ENCODE measurements at regions of chr12 and their contacts with region 1.

Region 1: GRCh38 chr12:54279866-54280467 is at the start of gene CBX5:
- DNase-seq: peak; percentile 100
- H3K4me3 Mint-ChIP-seq: no peak within 1 kb of the TSS
- H3K27ac Mint-ChIP-seq: no peak within 1 kb of the TSS
- H3K4me1 Mint-ChIP-seq: peaks cover 61% of the 10 kb centered on the region
- H3K27me3 Mint-ChIP-seq: no peaks in the 10 kb centered on the region
- total RNA-seq, gene CBX5: 103 to 106 TPM

Region 2: GRCh38 chr12:54187069-54187468 is 92.9 kb before region 1 on chr12:
- CTCF ChIA-PET with region 1: no interaction called
- POLR2A ChIA-PET with region 1: no interaction called
- DNase-seq: no peak
- H3K4me3 Mint-ChIP-seq: no peak overlapping the region
- H3K27ac Mint-ChIP-seq: no peak overlapping the region
- H3K4me1 Mint-ChIP-seq: peaks cover 24% of the 10 kb centered on the region
- H3K27me3 Mint-ChIP-seq: peaks cover 15% of the 10 kb centered on the region

Region 3: DNA sequence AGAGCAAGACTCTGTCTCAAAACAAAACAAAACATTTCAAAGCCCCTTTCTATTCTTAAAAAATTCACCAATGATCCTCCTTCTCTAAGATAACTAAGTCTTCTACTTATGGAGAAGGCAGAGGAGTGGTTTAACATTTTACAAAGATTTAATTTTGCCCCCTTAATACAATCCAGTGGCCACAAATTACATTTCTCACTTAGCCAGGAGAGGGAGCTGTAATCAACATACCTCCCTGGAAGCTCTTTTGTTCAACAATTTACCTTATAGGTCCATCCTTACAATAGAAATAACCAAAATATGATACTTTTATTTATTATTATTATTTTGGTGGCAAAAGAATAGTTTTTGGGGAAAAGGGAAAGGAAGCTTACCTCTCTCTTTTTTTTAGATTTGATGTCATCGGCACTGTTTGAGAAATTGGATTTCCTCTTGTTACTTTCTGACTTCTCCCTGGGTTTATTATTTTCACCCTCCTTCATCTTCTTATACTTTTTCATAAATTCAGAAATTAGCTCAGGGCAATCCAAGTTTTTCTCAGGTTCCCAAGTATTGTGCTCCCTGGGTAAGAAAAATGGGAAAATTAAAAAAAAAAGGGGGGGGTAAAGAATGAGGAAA is 28.2 kb before region 1 on chr12:
- CTCF ChIA-PET with region 1: interaction called, 14 read pairs
- POLR2A ChIA-PET with region 1: interaction called, 6 read pairs
- DNase-seq: no peak
- H3K4me3 Mint-ChIP-seq: no peak overlapping the region
- H3K27ac Mint-ChIP-seq: no peak overlapping the region
- H3K4me1 Mint-ChIP-seq: peaks cover 2% of the 10 kb centered on the region
- H3K27me3 Mint-ChIP-seq: no peaks in the 10 kb centered on the region

Region 4: GRCh38 chr12:54294152-54294952 is 14.4 kb after region 1 on chr12:
- CTCF ChIA-PET with region 1: interaction called, 17 read pairs
- POLR2A ChIA-PET with region 1: interaction called, 60 read pairs
- DNase-seq: peak; percentile 75
- H3K4me3 Mint-ChIP-seq: no peak overlapping the region
- H3K27ac Mint-ChIP-seq: no peak overlapping the region
- H3K4me1 Mint-ChIP-seq: peaks cover 12% of the 10 kb centered on the region
- H3K27me3 Mint-ChIP-seq: peaks cover 18% of the 10 kb centered on the region

Region 5: GRCh38 chr12:54337280-54337842 is 57.4 kb after region 1 on chr12:
- CTCF ChIA-PET with region 1: no interaction called
- POLR2A ChIA-PET with region 1: interaction called, 18 read pairs
- DNase-seq: no peak
- H3K4me3 Mint-ChIP-seq: no peak overlapping the region
- H3K27ac Mint-ChIP-seq: no peak overlapping the region
- H3K4me1 Mint-ChIP-seq: peaks cover 10% of the 10 kb centered on the region
- H3K27me3 Mint-ChIP-seq: no peaks in the 10 kb centered on the region

Region 6: GRCh38 chr12:54419088-54419892 is 139.3 kb after region 1 on chr12 and contains the start of gene ITGA5:
- CTCF ChIA-PET with region 1: no interaction called
- POLR2A ChIA-PET with region 1: interaction called, 10 read pairs
- DNase-seq: peak; percentile 47
- H3K4me3 Mint-ChIP-seq: peak within 1 kb of the TSS; percentile 93
- H3K27ac Mint-ChIP-seq: peak within 1 kb of the TSS; percentile 85
- H3K4me1 Mint-ChIP-seq: peaks cover 58% of the 10 kb centered on the region
- H3K27me3 Mint-ChIP-seq: peaks cover 30% of the 10 kb centered on the region
- total RNA-seq, gene ITGA5: 102 to 107 TPM

Measured in activated CD4-positive, alpha-beta memory T cell treated with anti-CD3 and anti-CD28 coated beads, Interleukin-2, amount 10 ng/mL, durations not matched to agents 7 days and 5 days (primary cell).